A673 (cell line): ENCODE measurements at regions of chr12 and their contacts with region 1.

Region 1: DNA sequence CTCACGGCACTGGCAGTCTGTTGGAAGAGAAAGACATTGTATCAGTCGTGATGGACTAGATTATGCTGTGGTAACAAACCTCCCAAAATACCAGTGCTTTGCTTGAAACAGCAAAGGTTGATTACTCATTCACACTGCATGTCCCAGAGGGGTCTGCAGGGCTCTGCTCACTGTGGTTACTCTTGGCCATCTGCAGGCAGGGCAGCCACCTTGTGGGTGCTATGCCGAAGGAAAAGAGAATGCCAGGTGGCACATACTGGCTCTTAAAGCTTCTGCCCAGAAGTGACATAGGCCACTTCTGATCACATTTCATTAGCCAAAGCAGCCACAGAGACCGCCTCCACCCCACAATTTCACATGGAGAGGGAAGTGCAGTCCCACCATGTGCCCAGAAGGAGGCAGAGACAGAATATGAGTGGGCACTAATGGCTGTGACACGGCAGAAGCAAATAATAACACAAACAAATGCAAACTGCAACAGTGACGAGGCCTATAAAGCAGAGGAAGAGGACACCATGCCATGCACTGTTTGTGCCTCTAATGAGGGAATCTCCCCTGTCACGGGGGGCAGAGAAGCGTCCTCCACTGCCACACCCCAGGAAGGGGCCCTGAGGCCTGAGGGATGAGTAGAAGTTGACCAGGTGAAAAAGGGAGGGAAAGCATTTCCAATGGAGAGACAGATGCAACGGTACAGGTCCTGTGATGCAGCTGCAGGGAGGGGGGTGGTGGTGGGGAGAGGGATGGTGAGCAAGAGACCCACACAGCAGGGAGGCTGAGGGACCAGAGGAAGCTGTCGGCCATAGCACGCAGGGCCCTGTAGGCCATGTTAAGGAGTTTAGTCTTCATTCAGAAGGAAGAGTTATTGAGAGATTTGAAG is 51.7 kb upstream of the KICS2 start:
- DNase-seq: peak; percentile 49
- H3K4me3 ChIP-seq: no peak overlapping the region
- H3K27ac ChIP-seq: no peak overlapping the region
- H3K4me1 ChIP-seq: no peaks in the 10 kb centered on the region
- H3K27me3 ChIP-seq: no peaks in the 10 kb centered on the region
- CTCF ChIP-seq: peak; percentile 61

Region 2: GRCh38 chr12:64392221-64392620 is 118.5 kb after region 1 on chr12:
- CTCF ChIA-PET with region 1: no interaction called
- POLR2A ChIA-PET with region 1: no interaction called
- intact Hi-C with region 1: loop called (anchors 5 kb)
- DNase-seq: peak; percentile 57
- H3K4me3 ChIP-seq: no peak overlapping the region
- H3K27ac ChIP-seq: no peak overlapping the region
- H3K4me1 ChIP-seq: no peaks in the 10 kb centered on the region
- H3K27me3 ChIP-seq: no peaks in the 10 kb centered on the region
- CTCF ChIP-seq: peak; percentile 58

Region 3: GRCh38 chr12:64706306-64706705 is 432.5 kb after region 1 on chr12:
- CTCF ChIA-PET with region 1: no interaction called
- POLR2A ChIA-PET with region 1: no interaction called
- intact Hi-C with region 1: no loop called
- DNase-seq: no peak
- H3K4me3 ChIP-seq: no peak overlapping the region
- H3K27ac ChIP-seq: no peak overlapping the region
- H3K4me1 ChIP-seq: no peaks in the 10 kb centered on the region
- H3K27me3 ChIP-seq: no peaks in the 10 kb centered on the region
- CTCF ChIP-seq: no peak